ENCODE measurements at regions of chr20 and their contacts with region 1.

Region 1: GRCh38 chr20:47663333-47664067 is 121.8 kb downstream of the SULF2 start:
- DNase-seq: peak; percentile 79
- H3K4me3 ChIP-seq: no peak overlapping the region
- H3K27ac ChIP-seq: no peak overlapping the region
- H3K4me1 ChIP-seq: peaks cover 7% of the 10 kb centered on the region
- H3K27me3 ChIP-seq: no peaks in the 10 kb centered on the region
- CTCF ChIP-seq: peak; percentile 94 to 96
- POLR2A ChIP-seq: no peak

Region 2: DNA sequence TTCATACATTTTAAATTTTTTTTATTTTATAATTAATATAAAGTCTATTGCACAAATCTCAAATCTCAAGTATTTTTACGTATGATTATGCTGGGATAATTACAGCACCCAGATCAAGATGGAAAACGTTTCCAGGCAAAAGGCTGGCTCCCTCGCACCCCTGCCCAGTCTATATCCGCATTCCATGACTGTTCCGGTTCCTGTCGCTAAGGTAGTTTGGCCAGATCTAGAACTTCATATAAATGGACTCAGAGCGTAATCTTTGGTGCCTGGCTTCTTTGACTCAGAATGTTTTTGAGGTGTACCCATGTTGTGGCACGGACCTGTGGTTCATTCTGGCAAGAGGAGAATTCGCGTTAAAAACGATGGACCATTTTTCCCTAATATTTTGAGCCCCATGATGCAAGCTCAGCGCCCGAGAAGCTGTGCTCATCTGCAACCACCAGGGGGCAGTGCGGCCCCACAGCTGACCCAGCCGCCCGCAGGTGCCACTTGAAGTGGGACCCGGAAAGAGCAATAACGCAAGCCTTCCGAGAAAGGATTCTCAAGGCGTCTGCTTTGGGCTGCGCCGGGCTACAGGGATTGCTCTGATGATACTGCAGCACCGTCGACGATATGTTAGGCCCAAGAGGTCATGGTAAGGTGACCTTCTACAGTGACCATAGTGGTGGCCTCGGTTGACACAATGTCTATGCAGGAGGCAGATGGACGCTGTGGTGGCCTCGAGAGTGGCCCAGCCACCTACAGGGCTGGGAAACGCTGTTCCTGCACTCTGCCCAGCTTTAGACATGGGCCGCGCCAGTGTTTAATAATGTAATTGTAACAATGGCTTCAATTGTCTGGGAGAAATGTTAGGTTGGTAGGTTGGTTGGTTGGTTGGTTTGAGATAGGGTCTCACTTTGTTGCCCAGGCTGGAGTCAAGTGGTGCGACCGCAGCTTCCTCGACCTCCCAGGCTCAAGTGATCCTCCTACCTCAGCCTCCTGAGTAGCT is 467.1 kb before region 1 on chr20:
- CTCF ChIA-PET with region 1: interaction called, 8 read pairs
- POLR2A ChIA-PET with region 1: no interaction called
- dilution Hi-C with region 1: no loop called
- intact Hi-C with region 1: loop called (anchors 2 kb)
- DNase-seq: peak; percentile 63
- H3K4me3 ChIP-seq: no peak overlapping the region
- H3K27ac ChIP-seq: no peak overlapping the region
- H3K4me1 ChIP-seq: peaks cover 3% of the 10 kb centered on the region
- H3K27me3 ChIP-seq: peaks cover 0 to 2% of the 10 kb centered on the region in 2 experiments
- CTCF ChIP-seq: peak; percentile 95 to 98
- POLR2A ChIP-seq: no peak

Region 3: GRCh38 chr20:47677635-47678453 is 14.3 kb after region 1 on chr20:
- CTCF ChIA-PET with region 1: interaction called, 16 read pairs
- POLR2A ChIA-PET with region 1: no interaction called
- dilution Hi-C with region 1: no loop called
- intact Hi-C with region 1: no loop called
- DNase-seq: peak; percentile 43
- H3K4me3 ChIP-seq: no peak overlapping the region
- H3K27ac ChIP-seq: no peak overlapping the region
- H3K4me1 ChIP-seq: no peaks in the 10 kb centered on the region
- H3K27me3 ChIP-seq: no peaks in the 10 kb centered on the region
- CTCF ChIP-seq: peak; percentile 75 to 92
- POLR2A ChIP-seq: no peak